ENCODE measurements at regions of chr17 and their contacts with region 1.

Region 1: DNA sequence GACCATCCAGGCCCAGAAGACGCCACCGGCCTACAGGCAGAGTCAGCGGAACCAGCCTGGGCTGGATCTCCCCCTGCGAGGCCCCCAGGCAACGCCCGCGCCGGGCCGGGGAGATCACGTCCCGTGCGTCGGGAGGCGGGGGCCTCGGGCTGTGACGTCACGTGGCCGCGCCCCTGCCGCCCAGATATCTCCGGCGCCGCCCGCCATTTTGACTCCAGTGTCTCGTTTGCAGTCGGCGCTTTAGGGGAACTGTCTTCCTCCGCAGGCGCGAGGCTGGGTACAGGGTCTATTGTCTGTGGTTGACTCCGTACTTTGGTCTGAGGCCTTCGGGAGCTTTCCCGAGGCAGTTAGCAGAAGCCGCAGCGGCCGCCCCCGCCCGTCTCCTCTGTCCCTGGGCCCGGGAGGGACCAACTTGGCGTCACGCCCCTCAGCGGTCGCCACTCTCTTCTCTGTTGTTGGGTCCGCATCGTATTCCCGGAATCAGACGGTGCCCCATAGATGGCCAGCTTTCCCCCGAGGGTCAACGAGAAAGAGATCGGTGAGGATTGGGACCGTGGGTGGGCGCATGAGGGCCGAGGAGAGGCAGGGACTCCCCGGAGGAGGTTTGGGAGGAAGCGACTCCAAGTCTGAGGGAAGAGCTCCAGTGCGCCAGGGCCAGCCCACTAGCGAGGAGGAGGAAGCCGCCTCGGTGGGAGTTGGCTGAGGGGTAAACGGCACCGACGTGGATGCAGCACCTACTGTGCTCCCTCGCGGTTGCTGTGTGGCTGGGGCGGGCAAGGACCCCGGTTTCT is at the start of gene WSB1:
- DNase-seq: peak; percentile 93 to 97
- H3K4me3 ChIP-seq: peak within 1 kb of the TSS; percentile 84 to 89
- H3K27ac ChIP-seq: peak within 1 kb of the TSS; percentile 99 to 100
- H3K4me1 ChIP-seq: peaks cover 0 to 35% (median 22%) of the 10 kb centered on the region in 4 donors
- H3K27me3 ChIP-seq: no peaks in the 10 kb centered on the region
- CTCF ChIP-seq: no peak

Region 2: DNA sequence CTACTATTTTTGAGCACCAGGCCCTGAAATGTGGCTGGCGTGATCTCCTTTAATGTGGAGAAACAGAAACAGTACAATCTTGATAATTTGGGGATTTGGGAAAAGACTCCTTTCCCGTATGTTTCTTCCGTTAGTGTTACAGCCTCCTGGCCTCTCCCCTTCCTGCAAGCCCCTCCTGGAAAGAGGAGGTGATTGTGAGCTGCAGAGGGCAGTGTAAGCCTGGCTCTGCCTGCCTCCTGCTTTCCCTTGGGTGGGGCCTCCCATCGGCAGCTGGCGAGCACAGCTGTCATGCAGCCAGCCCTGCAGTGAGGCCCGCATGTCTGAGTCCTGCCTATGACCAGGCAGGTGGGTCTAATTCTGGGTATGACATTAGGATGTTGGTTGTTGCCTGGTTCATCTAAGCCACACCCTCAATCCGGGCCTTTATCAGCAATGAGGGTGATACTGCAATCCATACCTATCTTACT is 48.8 kb before region 1 on chr17:
- intact Hi-C with region 1: loop called (anchors 1 kb)
- DNase-seq: peak; percentile 86 to 95
- H3K4me3 ChIP-seq: peak overlapping the region; percentile 8 to 32
- H3K27ac ChIP-seq: peak overlapping the region; percentile 93 to 96
- H3K4me1 ChIP-seq: peaks cover 6 to 94% (median 59%) of the 10 kb centered on the region in 4 donors
- H3K27me3 ChIP-seq: no peaks in the 10 kb centered on the region
- CTCF ChIP-seq: peak; percentile 46 to 59

Region 3: DNA sequence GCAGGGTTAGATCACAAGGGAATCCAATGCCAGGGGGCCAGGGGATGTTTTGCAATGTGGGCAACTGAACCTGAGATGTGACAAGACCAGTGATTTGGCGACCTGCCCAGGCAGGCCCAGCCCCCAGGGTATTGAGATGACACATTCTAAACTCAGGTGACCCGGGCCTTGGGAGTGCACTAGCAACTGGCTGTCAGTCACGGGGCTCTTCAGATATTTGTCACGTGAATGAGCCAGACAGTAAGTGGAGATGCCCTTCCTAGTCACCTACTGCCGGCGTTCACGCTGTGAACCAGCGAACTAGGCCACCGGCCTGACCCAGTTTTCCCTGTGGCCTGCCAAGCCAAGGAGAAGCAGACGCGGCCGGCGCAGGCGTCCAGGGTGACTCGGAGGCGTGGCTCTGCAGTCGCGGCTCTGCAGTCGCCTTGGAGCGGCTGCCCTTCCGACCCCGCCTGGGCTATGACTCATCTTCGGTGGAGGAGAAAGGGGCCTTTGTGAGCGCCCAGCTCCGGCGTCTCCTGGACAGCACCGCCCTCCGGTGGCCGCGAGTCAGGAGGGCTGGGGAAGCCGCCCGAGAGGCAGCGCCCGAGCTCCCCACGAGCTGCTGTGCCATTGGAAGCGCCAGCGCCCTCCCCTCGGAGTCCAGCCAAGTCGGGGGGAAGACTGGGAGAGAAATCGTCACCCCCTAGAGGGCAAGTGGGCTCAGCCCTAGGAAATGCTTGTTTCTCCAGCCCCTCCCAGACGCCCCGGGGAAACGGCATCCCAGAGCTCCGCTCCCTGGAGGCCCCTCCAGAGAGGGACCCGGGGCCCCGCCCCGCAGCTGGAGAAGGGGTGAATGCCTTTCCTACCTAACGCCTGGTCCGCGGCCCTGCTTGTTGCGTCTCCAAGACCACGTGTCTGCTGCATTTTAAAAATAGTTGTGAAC is 38.7 kb after region 1 on chr17:
- intact Hi-C with region 1: loop called (anchors 2 kb)
- DNase-seq: peak; percentile 98 to 100
- H3K4me3 ChIP-seq: peak overlapping the region; percentile 48 to 62
- H3K27ac ChIP-seq: peak overlapping the region; percentile 86 to 95
- H3K4me1 ChIP-seq: peaks cover 6 to 24% (median 12%) of the 10 kb centered on the region in 4 donors
- H3K27me3 ChIP-seq: no peaks in the 10 kb centered on the region
- CTCF ChIP-seq: peak; percentile 91 to 95

Measured in tibial artery (tissue), 4 donors.